ENCODE measurements at regions of chr1 and their contacts with region 1.

Region 1: GRCh38 chr1:119367427-119368124 is 1.0 kb upstream of the HAO2 start:
- DNase-seq: no peak
- ATAC-seq: no peak
- H3K4me3 ChIP-seq: no peak overlapping the region
- H3K27ac ChIP-seq: no peak overlapping the region
- H3K4me1 ChIP-seq: no peaks in the 10 kb centered on the region
- H3K27me3 ChIP-seq: no peaks in the 10 kb centered on the region

Region 2: GRCh38 chr1:118151312-118151937 is 1216.2 kb before region 1 on chr1:
- intact Hi-C with region 1: loop called in 1 of 2 experiments (anchors 5 kb)
- DNase-seq: peak in 1 of 2 donors; percentile 44
- ATAC-seq: no peak
- H3K4me3 ChIP-seq: no peak overlapping the region
- H3K27ac ChIP-seq: no peak overlapping the region
- H3K4me1 ChIP-seq: no peaks in the 10 kb centered on the region
- H3K27me3 ChIP-seq: no peaks in the 10 kb centered on the region

Measured in aorta (tissue), 5 donors.